ENCODE measurements at regions of chr9 and their contacts with region 1.

Region 1: DNA sequence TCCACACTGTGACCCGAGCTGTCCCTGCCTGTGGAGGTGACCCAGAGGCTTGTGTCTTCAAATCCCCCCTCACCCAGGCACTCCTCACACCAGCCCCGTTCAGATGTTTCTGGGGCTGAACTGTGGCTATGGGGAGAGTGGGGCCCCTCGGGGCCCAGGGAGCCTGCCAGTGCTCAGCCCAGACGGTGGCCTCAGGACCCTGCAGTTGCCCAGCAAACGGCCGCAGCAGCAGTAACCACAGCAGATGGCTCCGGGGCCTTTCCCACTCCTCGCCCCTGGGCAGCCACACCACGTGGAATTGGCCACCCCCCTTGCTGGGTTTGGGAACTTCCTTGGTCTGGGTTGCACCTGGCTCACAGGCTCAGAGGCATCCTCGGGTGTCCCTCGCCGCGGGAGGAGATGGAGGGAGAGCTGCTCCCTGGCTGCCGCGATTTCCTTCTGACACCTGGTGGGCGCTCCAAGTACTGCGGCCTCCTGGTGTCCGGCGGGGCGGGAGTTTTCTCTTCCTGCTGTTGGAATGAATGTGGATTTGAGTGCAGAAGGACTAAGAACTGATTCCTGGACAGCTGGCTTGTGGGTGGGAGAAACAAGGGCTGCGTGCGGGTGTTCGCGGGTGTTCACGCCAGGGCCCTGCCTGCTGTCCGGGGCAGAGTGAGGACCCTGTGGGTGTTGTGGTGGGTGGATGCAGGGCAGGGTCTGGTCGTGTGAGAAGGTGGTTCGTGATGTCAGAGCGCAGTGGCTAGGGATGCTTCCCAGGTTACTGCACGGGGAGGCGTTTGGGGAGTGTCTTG is 97.5 kb downstream of the COL5A1 start:
- DNase-seq: peak; percentile 66
- H3K4me3 ChIP-seq: no peak overlapping the region
- H3K27ac ChIP-seq: no peak overlapping the region
- H3K4me1 ChIP-seq: no peaks in the 10 kb centered on the region
- H3K27me3 ChIP-seq: no peaks in the 10 kb centered on the region
- CTCF ChIP-seq: peak; percentile 91 to 97 (median 94)
- POLR2A ChIP-seq: no peak

Region 2: DNA sequence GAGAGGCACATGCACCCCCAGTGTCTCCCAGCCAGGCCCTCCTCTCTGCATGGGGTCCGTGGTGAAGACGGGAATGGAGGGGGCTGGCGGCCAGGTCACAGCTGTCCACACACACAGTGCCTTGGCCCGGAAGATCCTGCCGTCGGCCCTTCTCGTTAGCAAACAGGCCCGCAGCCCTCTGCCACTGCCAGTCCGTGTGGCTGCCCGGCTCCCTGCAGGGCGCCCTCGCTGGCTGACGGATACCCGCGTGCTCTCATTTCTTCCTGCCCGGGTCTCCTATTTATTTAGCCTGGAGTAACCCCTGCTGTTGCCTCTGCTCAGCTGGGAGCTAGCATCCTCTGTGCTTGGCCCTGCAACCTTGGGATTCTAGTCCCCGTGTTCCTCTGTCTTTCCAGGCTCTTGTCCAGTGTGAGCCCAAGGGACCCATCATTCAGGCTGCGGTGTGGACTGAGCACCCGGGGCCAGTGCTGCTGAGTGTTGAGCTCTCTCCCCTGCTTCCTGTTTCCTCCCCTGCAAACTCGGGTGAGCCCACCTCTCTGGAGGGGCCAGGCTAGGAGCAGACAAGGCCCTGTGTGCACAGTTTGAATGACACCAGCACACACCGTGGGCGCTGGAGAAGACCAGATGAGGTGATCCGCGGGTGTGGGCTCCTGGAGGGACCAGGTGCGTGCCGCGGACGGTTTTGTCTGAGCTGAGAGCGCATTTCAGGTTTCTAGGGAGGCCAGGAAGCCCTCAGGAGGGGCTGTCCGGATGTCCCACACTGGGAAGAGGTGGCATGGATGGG is 560.1 kb before region 1 on chr9:
- intact Hi-C with region 1: loop called (anchors 10 kb)
- DNase-seq: no peak
- H3K4me3 ChIP-seq: no peak overlapping the region
- H3K27ac ChIP-seq: no peak overlapping the region
- H3K4me1 ChIP-seq: no peaks in the 10 kb centered on the region
- H3K27me3 ChIP-seq: no peaks in the 10 kb centered on the region
- CTCF ChIP-seq: no peak
- POLR2A ChIP-seq: no peak

Region 3: DNA sequence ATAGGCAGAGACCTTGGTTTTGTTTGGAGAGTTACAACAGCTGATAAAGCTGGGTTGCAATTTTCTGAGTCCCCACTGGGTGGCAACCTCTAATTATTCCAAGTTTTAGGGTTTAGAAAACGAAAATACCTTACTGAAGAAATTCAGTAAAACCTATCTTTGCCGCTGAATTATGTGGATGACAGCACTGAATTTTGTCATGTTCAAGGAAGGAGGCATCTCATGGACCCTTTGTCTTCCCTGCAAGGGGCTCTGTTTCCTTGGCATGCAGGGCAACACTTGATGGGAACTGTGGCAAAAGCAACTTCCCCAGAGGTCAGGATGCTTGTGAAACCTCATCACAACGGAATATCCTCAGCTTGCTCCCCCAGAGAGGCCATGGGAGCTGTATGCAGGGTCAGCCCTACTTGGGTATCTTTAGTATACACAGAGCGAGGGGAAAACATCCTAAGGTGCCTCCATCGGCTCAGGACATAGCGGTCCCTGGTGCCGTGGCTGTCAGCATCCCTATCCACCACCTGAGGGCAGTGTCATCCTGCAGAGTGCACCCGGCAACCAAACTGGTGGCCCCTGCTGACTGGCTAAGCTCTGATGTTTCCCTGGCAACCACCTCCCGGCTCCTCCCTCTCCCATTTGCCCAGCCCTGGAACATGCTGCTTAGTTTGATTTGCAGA is 289.7 kb before region 1 on chr9:
- intact Hi-C with region 1: loop called (anchors 1 kb)
- DNase-seq: peak; percentile 95
- H3K4me3 ChIP-seq: no peak overlapping the region
- H3K27ac ChIP-seq: no peak overlapping the region
- H3K4me1 ChIP-seq: no peaks in the 10 kb centered on the region
- H3K27me3 ChIP-seq: no peaks in the 10 kb centered on the region
- CTCF ChIP-seq: peak; percentile 90 to 99 (median 95)
- POLR2A ChIP-seq: no peak

Region 4: GRCh38 chr9:134641173-134641985 is 97.7 kb before region 1 on chr9 and contains the start of gene COL5A1:
- intact Hi-C with region 1: loop called (anchors 5 kb)
- DNase-seq: peak; percentile 92
- H3K4me3 ChIP-seq: peak within 1 kb of the TSS; percentile 53 to 56
- H3K27ac ChIP-seq: peak within 1 kb of the TSS; percentile 80
- H3K4me1 ChIP-seq: peaks cover 9% of the 10 kb centered on the region
- H3K27me3 ChIP-seq: no peaks in the 10 kb centered on the region
- CTCF ChIP-seq: peak in 2 of 4 experiments; percentile 60 to 62
- POLR2A ChIP-seq: peak; percentile 88
- total RNA-seq, gene COL5A1: 16.9 to 36.0 TPM

Region 5: GRCh38 chr9:134660407-134660806 is 78.7 kb before region 1 on chr9:
- intact Hi-C with region 1: loop called (anchors 5 kb)
- DNase-seq: no peak
- H3K4me3 ChIP-seq: no peak overlapping the region
- H3K27ac ChIP-seq: no peak overlapping the region
- H3K4me1 ChIP-seq: no peaks in the 10 kb centered on the region
- H3K27me3 ChIP-seq: no peaks in the 10 kb centered on the region
- CTCF ChIP-seq: peak in 1 of 4 experiments; percentile 20
- POLR2A ChIP-seq: no peak

Region 6: DNA sequence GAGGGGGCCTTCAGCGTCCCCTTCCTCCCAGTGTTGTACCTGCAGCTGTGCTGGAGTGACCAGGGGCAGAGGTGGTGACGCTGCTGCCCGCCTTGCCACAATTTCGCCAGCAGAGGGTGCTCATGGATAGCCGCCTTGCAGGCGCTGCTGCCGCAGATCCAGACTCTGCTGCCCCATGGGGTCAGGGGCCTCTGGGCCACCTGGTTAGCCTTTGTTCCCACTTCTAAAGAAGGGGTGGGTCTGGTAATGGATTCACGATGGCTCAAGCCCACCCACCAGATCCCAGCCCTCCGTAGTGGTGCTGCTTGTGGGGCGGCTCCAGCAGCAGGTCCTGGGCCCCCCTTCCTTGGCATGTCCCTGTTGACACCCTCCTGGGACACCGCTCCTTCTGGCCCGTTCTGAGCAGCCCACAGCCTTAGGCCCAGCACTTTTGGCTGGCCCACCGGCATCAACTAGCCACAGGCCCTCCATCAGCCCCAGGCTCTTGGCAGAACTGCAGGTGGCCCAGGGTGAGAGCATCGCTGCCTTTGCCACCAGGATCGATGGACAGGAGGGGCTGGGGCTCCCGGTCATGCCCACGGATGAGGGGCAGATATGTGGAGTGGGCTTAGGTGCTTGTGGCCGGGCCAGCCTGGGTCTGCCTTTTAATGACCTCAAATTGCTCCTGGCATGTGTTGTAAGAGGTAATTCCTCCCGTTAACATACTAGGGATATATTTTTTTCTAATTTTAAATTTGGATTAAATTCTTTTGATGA is 40.3 kb before region 1 on chr9:
- intact Hi-C with region 1: loop called (anchors 1 kb)
- DNase-seq: peak; percentile 38
- H3K4me3 ChIP-seq: no peak overlapping the region
- H3K27ac ChIP-seq: no peak overlapping the region
- H3K4me1 ChIP-seq: peaks cover 5% of the 10 kb centered on the region
- H3K27me3 ChIP-seq: no peaks in the 10 kb centered on the region
- CTCF ChIP-seq: peak; percentile 71 to 90 (median 88)
- POLR2A ChIP-seq: no peak